Heart left ventricle (tissue), 16 donors: ENCODE measurements at regions of chr18 and their contacts with region 1.

Region 1: GRCh38 chr18:50203801-50204604 is 9.1 kb upstream of the MYO5B start:
- DNase-seq: peak in 1 of 5 donors; percentile 62
- ATAC-seq: peak in 3 of 4 donors; percentile 37 to 71 (median 41)
- H3K4me3 ChIP-seq: peak overlapping the region in 2 of 12 donors; percentile 13 to 19
- H3K27ac ChIP-seq: no peak overlapping the region
- H3K4me1 ChIP-seq: peaks cover 0 to 6% (median 0%) of the 10 kb centered on the region in 12 donors
- H3K27me3 ChIP-seq: peaks cover 0 to 25% (median 3%) of the 10 kb centered on the region in 9 donors
- CTCF ChIP-seq: peak; percentile 30 to 64 (median 52)
- POLR2A ChIP-seq: no peak

Region 2: DNA sequence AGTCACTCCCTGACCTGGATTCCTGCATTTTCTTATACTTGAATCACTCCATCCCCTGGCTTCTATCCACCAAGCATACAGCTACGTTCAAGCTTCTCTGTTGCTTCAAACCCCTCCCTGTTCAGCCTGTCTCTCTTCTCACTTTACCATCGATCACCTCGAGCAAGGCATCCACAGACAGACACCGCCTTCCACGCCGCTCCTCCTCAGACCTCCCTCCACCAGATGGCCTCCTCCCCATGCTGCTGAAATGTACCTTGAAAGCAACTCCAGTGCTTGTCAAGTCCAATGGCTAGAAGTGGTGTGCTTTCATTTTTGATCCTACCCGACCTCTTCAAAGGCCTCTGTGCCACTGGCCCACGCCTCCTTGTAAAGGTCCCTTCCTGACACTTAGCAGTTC is 259.3 kb before region 1 on chr18:
- intact Hi-C with region 1: loop called in 2 of 10 experiments (anchors 10 kb)
- DNase-seq: no peak
- ATAC-seq: peak in 2 of 4 donors; percentile 44 to 50
- H3K4me3 ChIP-seq: no peak overlapping the region
- H3K27ac ChIP-seq: no peak overlapping the region
- H3K4me1 ChIP-seq: no peaks in the 10 kb centered on the region
- H3K27me3 ChIP-seq: peaks cover 0 to 4% (median 0%) of the 10 kb centered on the region in 9 donors
- CTCF ChIP-seq: peak in 6 of 12 donors; percentile 8 to 44 (median 24)
- POLR2A ChIP-seq: no peak

Region 3: DNA sequence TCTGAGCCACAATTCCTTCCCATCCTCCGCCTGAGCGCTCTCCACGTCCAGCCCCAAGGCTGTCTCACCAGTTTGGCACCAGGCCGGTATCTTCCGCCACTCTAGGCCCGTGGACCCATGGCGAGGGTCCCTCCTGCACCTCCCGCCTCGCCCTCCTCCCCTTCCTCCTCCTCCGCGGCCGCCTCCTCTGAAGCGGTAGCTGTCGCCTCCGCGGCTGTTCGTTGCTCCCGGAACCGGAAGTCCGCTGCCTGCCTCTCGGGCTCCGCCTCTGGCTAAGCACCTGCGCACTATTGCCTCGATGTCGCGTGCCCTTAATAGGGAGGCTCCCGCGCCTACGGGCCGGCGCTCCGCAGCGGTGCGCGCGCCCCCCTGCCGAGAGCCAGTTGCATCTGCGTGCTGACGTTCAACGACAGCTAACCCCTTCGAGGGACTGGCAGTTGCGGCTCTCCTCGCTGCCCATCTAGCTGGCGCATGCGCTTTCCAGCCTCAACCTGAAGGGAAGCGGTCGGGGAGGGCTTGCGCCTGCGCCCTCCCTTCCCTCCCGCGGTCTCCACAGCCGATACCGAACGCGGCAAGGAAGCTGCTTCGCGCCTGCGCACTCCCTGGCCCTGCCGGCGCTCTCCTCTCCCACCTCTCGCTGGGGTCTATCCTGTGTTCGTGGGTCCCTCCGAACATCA is 77.4 kb after region 1 on chr18 and contains the start of gene MBD1:
- intact Hi-C with region 1: no loop called
- DNase-seq: peak; percentile 97 to 99 (median 99)
- ATAC-seq: peak; percentile 96 to 97 (median 96)
- H3K4me3 ChIP-seq: peak within 1 kb of the TSS; percentile 62 to 99 (median 87)
- H3K27ac ChIP-seq: peak within 1 kb of the TSS; percentile 41 to 96 (median 92)
- H3K4me1 ChIP-seq: peaks cover 3 to 36% (median 23%) of the 10 kb centered on the region in 12 donors
- H3K27me3 ChIP-seq: no peaks in the 10 kb centered on the region
- CTCF ChIP-seq: peak in 10 of 12 donors; percentile 23 to 61 (median 36)
- POLR2A ChIP-seq: peak in 1 of 2 donors; percentile 79
- total RNA-seq, gene MBD1: 43.9 to 87.7 (median 51.4) TPM